PC-3 (cell line): ENCODE measurements at regions of chr12 and their contacts with region 1.

Region 1: DNA sequence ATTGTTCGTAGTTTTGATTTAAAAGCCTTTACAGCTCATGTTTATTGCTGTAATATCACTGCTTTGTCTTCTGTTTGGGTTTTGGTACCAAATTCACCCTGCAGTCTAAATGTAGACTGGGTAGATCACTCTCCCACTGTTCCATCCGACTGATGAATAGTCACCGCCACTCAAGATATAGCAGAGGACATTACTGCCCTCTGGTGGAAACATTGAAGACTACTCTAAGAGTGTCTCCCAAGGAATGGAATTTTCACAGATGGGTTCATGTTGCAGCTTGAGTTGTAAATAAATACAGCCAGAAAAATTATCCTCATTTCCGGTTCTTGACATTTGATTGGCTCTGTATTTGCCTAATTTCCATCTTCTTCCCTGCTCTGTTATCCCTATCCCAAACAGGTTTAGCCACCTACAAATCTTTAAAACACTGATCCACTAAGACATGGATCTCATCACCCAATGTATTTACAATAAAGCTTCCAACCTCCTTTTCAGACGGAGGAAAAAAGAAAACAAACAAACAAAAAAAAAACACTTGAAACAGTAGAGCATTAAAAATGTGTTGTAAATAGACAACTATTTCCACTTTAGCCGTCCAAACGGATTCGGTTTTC is 198.3 kb upstream of the CPNE8 start:
- DNase-seq: peak; percentile 90
- ATAC-seq: peak; percentile 90
- H3K4me3 ChIP-seq: no peak overlapping the region
- H3K27ac ChIP-seq: peak overlapping the region; percentile 71; the same call in 1 of the 2 replicates
- H3K4me1 ChIP-seq: peaks cover 19% of the 10 kb centered on the region
- H3K27me3 ChIP-seq: no peaks in the 10 kb centered on the region
- CTCF ChIP-seq: peak; percentile 85

Region 2: GRCh38 chr12:38110026-38110699 is 993.5 kb before region 1 on chr12:
- CTCF ChIA-PET with region 1: no interaction called
- POLR2A ChIA-PET with region 1: no interaction called
- intact Hi-C with region 1: loop called (anchors 5 kb)
- DNase-seq: peak; percentile 12
- ATAC-seq: no peak
- H3K4me3 ChIP-seq: no peak overlapping the region
- H3K27ac ChIP-seq: no peak overlapping the region
- H3K4me1 ChIP-seq: no peaks in the 10 kb centered on the region
- H3K27me3 ChIP-seq: no peaks in the 10 kb centered on the region
- CTCF ChIP-seq: no peak

Region 3: DNA sequence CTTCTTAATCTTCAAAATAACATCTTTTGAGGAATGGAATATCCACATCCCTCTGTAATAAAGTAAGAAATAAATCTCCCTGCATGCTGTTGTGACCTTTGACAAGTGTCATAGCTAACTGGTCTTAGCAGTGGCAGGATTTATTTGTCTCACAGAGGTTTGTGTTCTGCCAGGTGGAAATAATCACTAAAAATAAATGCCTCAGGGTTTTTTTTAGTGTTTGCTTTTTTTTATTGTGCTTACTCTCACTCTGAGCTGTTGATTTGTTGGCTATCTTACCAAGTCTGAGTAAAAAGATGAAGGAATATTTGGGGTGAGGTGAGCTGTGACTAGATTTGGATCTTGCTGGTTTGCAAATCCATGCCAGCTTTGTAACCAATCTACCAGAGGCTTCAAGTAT is 501.7 kb before region 1 on chr12:
- CTCF ChIA-PET with region 1: no interaction called
- POLR2A ChIA-PET with region 1: no interaction called
- intact Hi-C with region 1: loop called (anchors 10 kb)
- DNase-seq: peak; percentile 82
- ATAC-seq: peak; percentile 97
- H3K4me3 ChIP-seq: no peak overlapping the region
- H3K27ac ChIP-seq: peak overlapping the region; percentile 17; the same call in 1 of the 2 replicates
- H3K4me1 ChIP-seq: peaks cover 14% of the 10 kb centered on the region
- H3K27me3 ChIP-seq: no peaks in the 10 kb centered on the region
- CTCF ChIP-seq: no peak

Region 4: DNA sequence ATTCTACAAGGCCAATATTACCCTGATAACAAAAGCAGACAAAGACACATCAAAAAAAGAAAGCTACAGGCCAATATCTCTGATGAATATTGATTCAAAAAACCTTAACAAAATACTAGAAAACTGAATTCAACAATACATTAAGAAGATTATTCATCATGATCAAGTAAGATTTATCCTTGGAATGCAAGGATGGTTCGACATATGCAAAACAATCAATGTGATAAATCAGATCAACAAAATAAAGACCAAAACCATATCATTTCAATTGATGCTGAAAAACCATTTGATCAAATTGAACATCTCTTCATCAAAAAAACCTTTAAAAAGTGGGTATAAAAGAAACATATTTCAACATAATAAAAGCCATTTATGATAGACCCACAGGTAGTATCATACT is 315.6 kb before region 1 on chr12:
- CTCF ChIA-PET with region 1: interaction called, 15 read pairs
- POLR2A ChIA-PET with region 1: no interaction called
- intact Hi-C with region 1: no loop called
- DNase-seq: no peak
- ATAC-seq: no peak
- H3K4me3 ChIP-seq: no peak overlapping the region
- H3K27ac ChIP-seq: no peak overlapping the region
- H3K4me1 ChIP-seq: no peaks in the 10 kb centered on the region
- H3K27me3 ChIP-seq: no peaks in the 10 kb centered on the region
- CTCF ChIP-seq: no peak

Region 5: DNA sequence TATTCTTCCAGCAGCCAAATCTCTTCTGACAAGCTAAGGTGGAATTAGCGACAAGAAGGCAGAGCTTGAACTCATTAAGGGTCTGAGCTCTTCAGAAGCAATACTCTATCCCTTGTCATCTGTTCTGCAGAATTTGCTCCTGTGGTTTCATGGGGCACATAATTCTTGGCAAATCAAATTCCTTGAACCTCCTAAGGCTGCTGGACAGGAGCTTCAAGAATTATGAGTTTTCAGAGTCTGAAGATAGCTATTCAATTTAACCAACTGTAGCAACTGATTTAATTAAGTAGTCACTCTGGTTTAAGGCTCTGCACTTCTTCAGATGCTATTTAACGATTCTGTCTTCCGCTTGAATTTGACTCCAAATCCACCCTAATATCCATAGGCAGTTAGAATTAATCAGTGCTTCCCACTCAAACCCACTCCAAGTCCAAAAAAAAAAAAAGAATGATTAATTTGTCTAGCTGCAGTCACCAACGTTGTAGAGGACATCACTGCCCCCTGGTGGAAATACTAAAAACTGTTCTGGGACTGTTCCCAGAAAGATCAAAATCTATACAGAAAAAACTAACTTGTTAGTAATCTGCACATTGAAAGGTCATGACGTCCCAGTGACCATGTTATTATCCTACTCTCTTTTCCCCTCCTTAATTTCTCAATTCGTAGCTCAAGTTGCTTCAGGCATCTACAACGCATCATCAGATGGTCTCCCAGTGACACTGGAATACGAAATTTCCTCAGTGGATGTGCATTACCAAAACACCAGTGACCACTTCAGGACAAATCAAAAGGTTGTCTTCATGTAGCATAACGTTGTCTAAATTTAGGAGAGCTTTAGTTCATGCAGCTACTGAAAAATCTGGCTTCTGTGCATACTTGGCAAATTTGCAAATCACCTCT is 169.5 kb after region 1 on chr12:
- CTCF ChIA-PET with region 1: interaction called, 5 read pairs
- POLR2A ChIA-PET with region 1: no interaction called
- intact Hi-C with region 1: loop called (anchors 5 kb)
- DNase-seq: peak; percentile 67
- ATAC-seq: no peak
- H3K4me3 ChIP-seq: no peak overlapping the region
- H3K27ac ChIP-seq: no peak overlapping the region
- H3K4me1 ChIP-seq: no peaks in the 10 kb centered on the region
- H3K27me3 ChIP-seq: no peaks in the 10 kb centered on the region
- CTCF ChIP-seq: peak; percentile 85